ENCODE measurements at regions of chr1 and their contacts with region 1.

Region 1: DNA sequence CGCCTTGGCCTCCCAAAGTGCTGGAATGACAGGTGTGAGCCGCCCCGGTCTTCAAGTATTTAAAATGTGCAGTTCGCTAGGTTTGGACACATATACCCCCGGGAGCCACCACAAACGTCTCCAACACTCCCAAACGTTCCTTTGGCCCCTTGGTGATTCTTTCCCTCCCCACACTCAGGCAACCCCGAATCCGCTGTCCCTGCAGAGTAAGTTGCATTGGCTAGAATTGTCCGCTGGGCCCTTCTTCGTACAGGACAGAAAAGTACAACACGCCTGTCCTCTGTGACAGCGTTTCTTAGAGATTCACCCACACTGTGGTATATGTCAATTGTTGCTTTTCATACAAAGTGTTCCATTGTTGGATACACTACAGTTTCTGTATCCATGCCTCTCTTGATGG is 3.2 kb upstream of the PERM1 start:
- DNase-seq: no peak
- ATAC-seq: no peak
- H3K4me3 ChIP-seq: no peak overlapping the region
- H3K27ac ChIP-seq: no peak overlapping the region
- H3K4me1 ChIP-seq: peaks cover 39% of the 10 kb centered on the region
- H3K27me3 ChIP-seq: peaks cover 21 to 55% of the 10 kb centered on the region in 2 experiments
- CTCF ChIP-seq: no peak
- EP300 ChIP-seq: no peak
- POLR2A ChIP-seq: no peak
- RAD21 ChIP-seq: no peak

Region 2: GRCh38 chr1:1806890-1807289 is 821.8 kb after region 1 on chr1:
- CTCF ChIA-PET with region 1: no interaction called
- POLR2A ChIA-PET with region 1: no interaction called
- in situ Hi-C with region 1: no loop called
- intact Hi-C with region 1: loop called (anchors 5 kb)
- DNase-seq: no peak
- ATAC-seq: no peak
- H3K4me3 ChIP-seq: no peak overlapping the region
- H3K27ac ChIP-seq: no peak overlapping the region
- H3K4me1 ChIP-seq: no peaks in the 10 kb centered on the region
- H3K27me3 ChIP-seq: no peaks in the 10 kb centered on the region
- CTCF ChIP-seq: no peak
- EP300 ChIP-seq: no peak
- POLR2A ChIP-seq: no peak
- RAD21 ChIP-seq: no peak